A549 (cell line): ENCODE measurements at regions of chr1 and their contacts with region 1.

Region 1: GRCh38 chr1:167533851-167534300 is 15.5 kb upstream of the CD247 start:
- DNase-seq: peak; percentile 68 to 90
- ATAC-seq: peak; percentile 89 to 95
- H3K4me3 ChIP-seq: no peak overlapping the region
- H3K27ac ChIP-seq: no peak overlapping the region
- H3K4me1 ChIP-seq: 0 out of 3 replicates have a peak, but pooled peaks cover 4% of the 10 kb centered on the region
- CTCF ChIP-seq: peak; percentile 88
- EP300 ChIP-seq: no peak
- POLR2A ChIP-seq: no peak
- RAD21 ChIP-seq: peak; percentile 86 to 90

Region 2: GRCh38 chr1:167270349-167271092 is 263.4 kb before region 1 on chr1:
- CTCF ChIA-PET with region 1: interaction called, 50 read pairs
- POLR2A ChIA-PET with region 1: no interaction called
- DNase-seq: no peak
- ATAC-seq: 0 out of 6 replicates have a peak, but pooled peaks of 1 of the 2 experiments have one; percentile 30
- H3K4me3 ChIP-seq: no peak overlapping the region
- H3K27ac ChIP-seq: no peak overlapping the region
- H3K4me1 ChIP-seq: peaks cover 5% of the 10 kb centered on the region; the same call in 1 of the 3 replicates
- CTCF ChIP-seq: no peak
- EP300 ChIP-seq: no peak
- POLR2A ChIP-seq: no peak
- RAD21 ChIP-seq: no peak

Region 3: DNA sequence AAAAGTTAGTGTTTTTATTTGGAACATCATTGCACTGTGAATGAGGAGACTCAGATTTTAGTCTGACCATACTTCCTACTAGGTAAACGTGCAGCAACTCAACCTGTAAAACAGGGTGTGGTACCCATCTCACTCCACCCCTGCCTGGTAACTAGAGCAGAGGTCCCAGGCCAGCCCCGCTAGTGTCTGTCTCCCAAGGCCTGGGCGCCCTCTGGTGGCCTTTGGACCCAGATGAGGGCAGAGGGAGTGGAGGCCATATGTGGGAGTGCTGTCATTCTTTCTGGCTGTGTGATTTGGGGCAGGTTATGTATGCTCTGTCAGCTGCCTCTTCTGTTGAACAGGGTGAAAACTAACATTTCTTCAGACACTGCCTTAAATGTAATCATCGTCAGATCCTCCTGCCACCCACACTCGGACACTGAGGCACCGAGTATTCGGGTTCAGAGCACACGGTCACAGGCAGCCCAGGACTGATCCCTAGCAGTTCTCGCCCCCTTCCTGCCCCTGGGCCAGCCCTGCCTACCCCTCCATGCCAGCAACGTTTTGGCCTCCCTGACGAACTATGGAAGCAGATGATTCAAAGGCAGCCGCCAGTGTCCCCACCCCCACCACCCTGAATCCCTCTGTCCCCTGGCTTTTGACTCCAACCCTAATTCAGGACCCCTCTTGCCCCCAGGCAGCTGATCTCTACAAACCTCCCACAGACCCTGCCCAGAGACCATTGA is 91.6 kb before region 1 on chr1:
- CTCF ChIA-PET with region 1: interaction called, 19 read pairs
- POLR2A ChIA-PET with region 1: no interaction called
- DNase-seq: peak; percentile 79 to 93
- ATAC-seq: peak; percentile 95 to 96
- H3K4me3 ChIP-seq: no peak overlapping the region
- H3K27ac ChIP-seq: peak overlapping the region in 1 of 2 experiments; percentile 14; a peak in 1 of 6 replicates
- H3K4me1 ChIP-seq: peaks cover 3% of the 10 kb centered on the region; the same call in 2 of the 3 replicates
- CTCF ChIP-seq: peak; percentile 91
- EP300 ChIP-seq: no peak
- POLR2A ChIP-seq: no peak
- RAD21 ChIP-seq: peak; percentile 92

Region 4: DNA sequence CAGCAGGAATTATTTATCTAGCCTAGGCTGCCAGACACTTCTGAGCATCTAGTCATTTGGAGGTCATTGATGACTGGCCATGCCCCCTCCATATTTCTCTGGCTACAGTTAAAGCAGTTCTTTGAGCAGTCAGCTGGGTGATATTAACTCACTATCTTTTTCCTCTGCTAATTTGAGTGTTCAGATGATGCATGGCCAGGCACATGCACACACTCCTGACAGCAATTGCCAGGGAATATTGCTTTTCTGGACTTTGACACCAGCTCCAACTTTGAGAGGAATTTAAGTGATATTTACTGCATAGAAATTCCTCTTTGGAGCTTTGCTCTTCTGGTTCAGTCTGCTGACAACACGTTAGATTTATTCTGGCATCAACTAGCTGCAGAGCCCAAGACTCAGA is 68.1 kb before region 1 on chr1:
- CTCF ChIA-PET with region 1: interaction called, 11 read pairs
- POLR2A ChIA-PET with region 1: no interaction called
- DNase-seq: no peak
- ATAC-seq: no peak
- H3K4me3 ChIP-seq: no peak overlapping the region
- H3K27ac ChIP-seq: no peak overlapping the region
- H3K4me1 ChIP-seq: peaks cover 9% of the 10 kb centered on the region
- CTCF ChIP-seq: no peak
- EP300 ChIP-seq: no peak
- POLR2A ChIP-seq: no peak
- RAD21 ChIP-seq: no peak

Region 5: DNA sequence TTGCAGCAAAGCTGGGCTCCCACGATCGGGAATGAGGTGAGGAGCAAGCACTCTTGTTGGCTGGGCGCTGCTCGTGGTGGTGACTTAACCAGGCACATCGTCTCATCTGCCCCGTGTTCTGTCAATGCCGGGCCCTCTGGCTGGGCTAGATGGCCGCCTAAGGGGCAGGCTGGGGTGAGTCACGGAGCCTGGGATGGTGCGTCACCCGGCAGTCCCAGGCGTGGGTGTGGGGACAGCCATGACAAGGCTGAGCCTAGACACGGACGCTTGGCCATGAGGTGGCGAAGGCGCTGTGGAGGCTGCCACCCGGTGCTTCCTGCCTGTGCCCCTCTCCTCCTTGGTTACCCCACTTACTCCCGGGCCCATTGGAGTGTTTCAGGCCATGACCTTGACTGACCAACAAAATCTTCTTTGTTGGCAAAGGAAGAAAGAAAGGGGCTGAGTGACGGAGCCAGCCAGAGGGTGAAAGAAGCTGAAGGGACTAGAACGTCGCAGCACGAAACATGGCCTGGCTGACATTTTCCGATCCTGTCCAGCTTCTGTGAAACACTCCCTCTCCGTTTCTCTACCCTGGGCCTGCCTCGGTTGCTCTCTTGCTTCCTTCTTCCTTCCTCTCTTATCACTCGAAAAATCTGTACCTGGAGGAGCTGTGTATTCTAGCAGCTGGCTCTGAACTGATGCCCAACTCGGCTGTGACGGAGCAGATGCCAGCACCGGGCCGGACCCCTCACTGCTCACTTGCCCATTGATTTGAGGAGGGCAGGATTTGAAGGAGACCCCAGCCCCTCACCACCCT is 16.1 kb before region 1 on chr1:
- CTCF ChIA-PET with region 1: interaction called, 29 read pairs
- POLR2A ChIA-PET with region 1: no interaction called
- DNase-seq: no peak
- ATAC-seq: peak; percentile 38 to 59; a peak in 3 of 6 replicates
- H3K4me3 ChIP-seq: no peak overlapping the region
- H3K27ac ChIP-seq: no peak overlapping the region
- H3K4me1 ChIP-seq: no peaks in the 10 kb centered on the region
- CTCF ChIP-seq: no peak
- EP300 ChIP-seq: no peak
- POLR2A ChIP-seq: no peak
- RAD21 ChIP-seq: no peak